ENCODE measurements at regions of chr5 and their contacts with region 1.

Region 1: GRCh38 chr5:142817949-142818431 is 47.8 kb downstream of the ARHGAP26 start:
- DNase-seq: no peak
- H3K4me3 ChIP-seq: no peak overlapping the region
- H3K27ac ChIP-seq: no peak overlapping the region
- H3K4me1 ChIP-seq: peaks cover 36% of the 10 kb centered on the region
- H3K27me3 ChIP-seq: no peaks in the 10 kb centered on the region
- CTCF ChIP-seq: no peak

Region 2: GRCh38 chr5:142779163-142779840 is 38.7 kb before region 1 on chr5:
- CTCF ChIA-PET with region 1: no interaction called
- dilution Hi-C with region 1: no loop called
- in situ Hi-C with region 1: no loop called
- intact Hi-C with region 1: loop called (anchors 2 kb)
- DNase-seq: peak; percentile 68
- H3K4me3 ChIP-seq: no peak overlapping the region
- H3K27ac ChIP-seq: no peak overlapping the region
- H3K4me1 ChIP-seq: peaks cover 25% of the 10 kb centered on the region
- H3K27me3 ChIP-seq: no peaks in the 10 kb centered on the region
- CTCF ChIP-seq: no peak

Region 3: DNA sequence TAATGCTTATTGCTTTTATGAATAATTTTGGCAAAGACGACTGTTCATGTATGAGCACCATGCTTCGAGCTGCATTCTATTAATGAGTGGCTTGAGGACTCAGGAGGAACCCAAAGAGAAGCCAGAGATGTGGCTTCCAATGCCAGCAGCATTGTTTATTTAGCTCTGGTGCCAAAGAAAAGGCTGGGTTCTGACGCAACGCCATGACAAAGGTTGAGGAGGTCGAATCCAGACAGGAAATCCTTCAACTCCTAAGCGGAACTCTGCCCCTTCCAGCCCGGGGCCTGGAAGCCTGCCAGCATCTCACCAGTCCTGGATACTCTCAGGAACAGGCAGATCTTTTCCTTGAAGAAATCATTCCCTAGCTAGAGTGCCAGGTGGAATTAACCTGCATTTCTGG is 56.5 kb after region 1 on chr5:
- CTCF ChIA-PET with region 1: no interaction called
- dilution Hi-C with region 1: no loop called
- in situ Hi-C with region 1: no loop called
- intact Hi-C with region 1: no loop called
- DNase-seq: peak; percentile 72
- H3K4me3 ChIP-seq: no peak overlapping the region
- H3K27ac ChIP-seq: peak overlapping the region; percentile 0
- H3K4me1 ChIP-seq: peaks cover 46% of the 10 kb centered on the region
- H3K27me3 ChIP-seq: no peaks in the 10 kb centered on the region
- CTCF ChIP-seq: no peak

Region 4: DNA sequence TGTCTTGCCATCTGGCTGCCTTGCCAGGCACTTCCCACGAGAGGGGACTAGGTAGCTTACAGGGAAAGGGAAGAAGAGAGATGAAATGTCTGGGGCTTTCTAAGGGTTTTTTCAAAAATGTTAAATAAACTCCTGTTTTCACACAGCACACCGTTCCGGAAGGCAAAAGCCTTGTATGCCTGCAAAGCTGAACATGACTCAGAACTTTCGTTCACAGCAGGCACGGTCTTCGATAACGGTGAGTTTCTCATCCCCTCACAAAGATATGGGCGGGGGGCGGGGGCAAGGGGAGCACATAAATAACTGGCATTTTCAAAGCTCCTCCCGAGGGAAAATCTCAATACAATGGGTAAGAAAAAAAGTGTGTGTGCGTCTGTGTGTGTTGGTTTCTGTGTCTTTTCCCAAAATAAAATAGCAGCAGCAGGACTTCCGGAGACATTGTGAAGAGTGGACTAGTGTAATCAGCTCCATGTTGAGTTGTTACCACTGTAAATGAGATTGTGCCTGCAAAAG is 395.9 kb after region 1 on chr5:
- CTCF ChIA-PET with region 1: no interaction called
- dilution Hi-C with region 1: no loop called
- in situ Hi-C with region 1: no loop called
- intact Hi-C with region 1: no loop called
- DNase-seq: no peak
- H3K4me3 ChIP-seq: no peak overlapping the region
- H3K27ac ChIP-seq: no peak overlapping the region
- H3K4me1 ChIP-seq: no peaks in the 10 kb centered on the region
- H3K27me3 ChIP-seq: no peaks in the 10 kb centered on the region
- CTCF ChIP-seq: no peak